ENCODE measurements at regions of chr5 and their contacts with region 1.

Region 1: GRCh38 chr5:15933259-15934206 is 246.1 kb downstream of the MARCHF11 start:
- DNase-seq: peak; percentile 87
- H3K4me3 ChIP-seq: no peak overlapping the region
- H3K27ac ChIP-seq: peak overlapping the region; percentile 63
- H3K4me1 ChIP-seq: peaks cover 20% of the 10 kb centered on the region
- H3K27me3 ChIP-seq: no peaks in the 10 kb centered on the region
- CTCF ChIP-seq: no peak
- POLR2A ChIP-seq: no peak

Region 2: DNA sequence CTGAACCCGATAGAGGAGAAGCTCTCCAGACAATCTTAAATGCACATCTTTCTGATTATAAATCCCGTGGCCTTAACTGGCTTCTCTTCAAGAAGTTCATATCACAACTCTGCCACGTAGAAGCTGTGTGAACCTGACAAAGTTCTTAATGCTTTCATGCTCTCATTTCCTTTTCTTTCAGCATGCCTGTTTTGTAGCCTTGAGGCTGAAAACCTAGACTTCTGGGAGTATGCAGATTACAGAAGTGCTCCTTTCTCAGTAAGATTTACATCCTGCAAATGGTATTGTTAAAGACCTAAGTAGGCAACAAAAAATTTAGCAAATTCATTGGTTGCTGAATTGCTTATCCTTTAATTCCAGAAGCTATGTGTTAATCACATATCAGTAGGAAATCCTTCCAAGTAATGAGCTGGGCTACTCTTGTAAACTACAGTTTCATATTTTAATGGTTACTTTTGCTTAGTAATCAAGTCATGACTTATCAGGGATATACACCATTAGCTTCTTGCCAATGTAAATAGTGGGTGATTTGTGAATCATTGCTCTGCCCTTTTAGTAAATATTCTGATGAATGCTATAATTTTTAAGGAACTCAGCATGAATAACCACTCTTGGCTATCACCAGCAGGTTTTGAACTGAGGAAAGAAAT is 98.8 kb before region 1 on chr5:
- CTCF ChIA-PET with region 1: interaction called, 3 read pairs
- POLR2A ChIA-PET with region 1: no interaction called
- dilution Hi-C with region 1: no loop called
- intact Hi-C with region 1: loop called (anchors 2 kb)
- DNase-seq: peak; percentile 94
- H3K4me3 ChIP-seq: peak overlapping the region in 1 of 3 experiments; percentile 27
- H3K27ac ChIP-seq: peak overlapping the region; percentile 79
- H3K4me1 ChIP-seq: peaks cover 24% of the 10 kb centered on the region
- H3K27me3 ChIP-seq: no peaks in the 10 kb centered on the region
- CTCF ChIP-seq: no peak
- POLR2A ChIP-seq: no peak

Region 3: DNA sequence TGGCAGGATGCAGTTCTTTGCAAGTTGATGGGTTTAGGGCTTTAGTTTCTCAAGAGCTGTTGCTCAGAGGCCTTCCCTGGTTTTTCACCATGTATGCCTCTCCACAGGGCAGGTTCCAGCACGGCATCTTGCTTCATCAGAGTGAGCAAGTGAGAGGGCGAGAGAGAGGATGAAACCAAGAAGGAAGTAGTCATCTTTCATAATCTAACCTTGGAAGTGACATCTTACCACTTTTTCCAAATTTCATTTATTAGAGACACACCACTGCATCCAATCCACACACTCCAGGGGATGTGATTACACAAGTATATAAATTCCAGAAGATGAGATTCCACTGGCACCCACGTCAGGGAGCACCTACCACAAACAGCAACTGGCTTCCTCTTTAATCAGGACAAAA is 48.4 kb before region 1 on chr5:
- CTCF ChIA-PET with region 1: no interaction called
- POLR2A ChIA-PET with region 1: no interaction called
- dilution Hi-C with region 1: no loop called
- intact Hi-C with region 1: no loop called
- DNase-seq: no peak
- H3K4me3 ChIP-seq: no peak overlapping the region
- H3K27ac ChIP-seq: no peak overlapping the region
- H3K4me1 ChIP-seq: no peaks in the 10 kb centered on the region
- H3K27me3 ChIP-seq: no peaks in the 10 kb centered on the region
- CTCF ChIP-seq: no peak
- POLR2A ChIP-seq: no peak

Region 4: DNA sequence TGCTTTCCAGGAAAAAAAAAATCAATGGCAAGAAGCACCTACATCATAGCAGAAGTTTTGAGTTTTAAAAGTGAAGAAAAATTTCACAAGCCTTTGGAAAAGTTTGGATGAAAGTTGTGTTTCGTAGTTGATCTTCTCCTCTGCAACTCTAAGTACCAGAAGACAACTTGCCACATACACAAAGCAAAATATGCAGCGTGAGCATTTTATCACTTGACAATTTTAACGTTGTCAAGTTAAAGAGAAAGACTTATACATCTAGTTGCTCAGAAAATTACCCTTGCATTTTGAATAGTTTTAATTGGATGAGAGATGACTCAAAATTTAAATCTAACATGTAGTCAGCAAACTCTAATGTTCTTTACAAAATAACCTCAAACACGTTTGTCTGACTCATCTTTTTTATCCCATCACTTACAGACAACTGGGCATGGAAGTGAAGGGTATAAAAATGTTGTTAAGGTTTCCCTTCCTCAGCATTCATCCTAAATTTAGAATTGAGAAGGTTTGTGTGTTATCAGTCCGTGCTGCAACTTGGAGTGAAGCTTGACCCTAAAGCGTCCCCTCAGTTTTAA is 32.6 kb after region 1 on chr5:
- CTCF ChIA-PET with region 1: no interaction called
- POLR2A ChIA-PET with region 1: no interaction called
- dilution Hi-C with region 1: no loop called
- intact Hi-C with region 1: no loop called
- DNase-seq: no peak
- H3K4me3 ChIP-seq: no peak overlapping the region
- H3K27ac ChIP-seq: no peak overlapping the region
- H3K4me1 ChIP-seq: no peaks in the 10 kb centered on the region
- H3K27me3 ChIP-seq: no peaks in the 10 kb centered on the region
- CTCF ChIP-seq: no peak
- POLR2A ChIP-seq: no peak